ENCODE measurements at regions of chr2 and their contacts with region 1.

Region 1: DNA sequence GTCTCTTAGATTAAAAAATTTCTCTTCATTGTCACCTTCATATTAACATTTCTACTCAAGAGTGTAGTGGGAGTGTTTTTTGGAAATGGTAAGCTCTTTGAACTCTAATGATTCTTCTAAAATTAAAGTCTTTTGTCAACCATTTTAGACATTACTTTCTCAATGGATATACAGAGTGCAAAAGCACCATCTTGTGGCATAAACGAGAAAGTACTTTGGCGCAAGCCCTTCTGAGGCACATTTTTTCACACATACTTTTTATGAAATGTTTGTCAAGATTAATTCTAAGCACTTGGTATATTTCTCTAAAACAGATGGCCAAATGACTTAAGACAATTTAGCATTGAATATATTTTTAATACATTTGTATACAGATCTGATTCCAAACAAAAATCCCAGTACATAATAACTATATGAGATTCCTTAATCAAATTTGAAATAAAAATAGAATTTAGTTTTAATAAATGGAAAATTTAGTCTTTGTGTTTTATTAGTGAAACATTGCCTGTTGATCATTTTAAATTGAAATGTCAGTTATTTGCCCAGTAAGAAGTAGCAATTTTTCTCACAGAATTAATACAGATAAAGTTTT is 63.3 kb upstream of the GALNT5 start:
- DNase-seq: peak; percentile 35
- H3K4me3 Mint-ChIP-seq: no peak overlapping the region
- H3K27ac Mint-ChIP-seq: no peak overlapping the region
- H3K4me1 Mint-ChIP-seq: no peaks in the 10 kb centered on the region
- H3K27me3 Mint-ChIP-seq: peaks cover 2% of the 10 kb centered on the region

Region 2: GRCh38 chr2:155368934-155369333 is 1825.3 kb before region 1 on chr2:
- CTCF ChIA-PET with region 1: interaction called, 4 read pairs
- intact Hi-C with region 1: loop called (anchors 2 kb)
- DNase-seq: no peak
- H3K4me3 Mint-ChIP-seq: no peak overlapping the region
- H3K27ac Mint-ChIP-seq: no peak overlapping the region
- H3K4me1 Mint-ChIP-seq: no peaks in the 10 kb centered on the region
- H3K27me3 Mint-ChIP-seq: peaks cover 2% of the 10 kb centered on the region

Region 3: DNA sequence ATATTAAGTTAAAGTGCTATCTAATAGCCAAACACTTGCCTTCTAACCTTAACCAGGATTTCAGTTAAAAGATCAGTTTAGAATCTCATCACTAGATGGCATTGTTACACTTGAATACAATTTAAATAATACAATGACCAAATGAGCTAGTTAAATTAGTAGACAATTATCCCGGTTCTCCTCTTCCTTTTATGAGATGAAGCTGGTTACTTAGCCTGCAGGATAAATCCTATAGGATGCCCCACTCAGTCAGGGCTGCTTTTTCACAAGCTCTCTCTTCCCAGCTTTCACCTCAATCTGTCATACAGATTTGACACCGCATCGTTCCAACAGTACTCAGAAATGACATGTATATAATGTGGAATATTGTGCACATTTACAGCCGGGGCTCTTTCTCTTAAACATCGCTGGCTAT is 1816.9 kb before region 1 on chr2:
- CTCF ChIA-PET with region 1: interaction called, 7 read pairs
- intact Hi-C with region 1: loop called (anchors 2 kb)
- DNase-seq: no peak
- H3K4me3 Mint-ChIP-seq: no peak overlapping the region
- H3K27ac Mint-ChIP-seq: no peak overlapping the region
- H3K4me1 Mint-ChIP-seq: peaks cover 2% of the 10 kb centered on the region
- H3K27me3 Mint-ChIP-seq: peaks cover 2% of the 10 kb centered on the region

Region 4: DNA sequence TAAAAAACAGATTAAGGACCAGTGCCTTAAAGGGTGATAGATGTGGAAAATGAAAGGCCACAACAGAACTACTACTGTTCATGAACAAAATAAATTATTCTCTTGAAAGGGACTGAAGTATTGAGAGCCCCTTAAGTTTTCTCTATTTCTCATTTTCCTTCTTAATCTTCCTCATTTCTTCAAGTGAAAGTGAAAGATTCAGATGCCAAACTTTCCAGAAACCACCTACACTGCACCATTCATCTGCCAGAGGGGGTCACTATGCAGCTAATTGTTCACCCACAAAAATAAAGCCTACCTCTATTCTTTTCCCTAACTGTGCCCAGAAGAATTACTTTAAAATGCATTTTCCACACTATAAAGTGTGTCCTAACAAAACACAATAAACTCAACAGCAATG is 1001.7 kb before region 1 on chr2:
- CTCF ChIA-PET with region 1: no interaction called
- intact Hi-C with region 1: loop called (anchors 5 kb)
- DNase-seq: peak; percentile 6
- H3K4me3 Mint-ChIP-seq: no peak overlapping the region
- H3K27ac Mint-ChIP-seq: no peak overlapping the region
- H3K4me1 Mint-ChIP-seq: no peaks in the 10 kb centered on the region
- H3K27me3 Mint-ChIP-seq: no peaks in the 10 kb centered on the region

Region 5: DNA sequence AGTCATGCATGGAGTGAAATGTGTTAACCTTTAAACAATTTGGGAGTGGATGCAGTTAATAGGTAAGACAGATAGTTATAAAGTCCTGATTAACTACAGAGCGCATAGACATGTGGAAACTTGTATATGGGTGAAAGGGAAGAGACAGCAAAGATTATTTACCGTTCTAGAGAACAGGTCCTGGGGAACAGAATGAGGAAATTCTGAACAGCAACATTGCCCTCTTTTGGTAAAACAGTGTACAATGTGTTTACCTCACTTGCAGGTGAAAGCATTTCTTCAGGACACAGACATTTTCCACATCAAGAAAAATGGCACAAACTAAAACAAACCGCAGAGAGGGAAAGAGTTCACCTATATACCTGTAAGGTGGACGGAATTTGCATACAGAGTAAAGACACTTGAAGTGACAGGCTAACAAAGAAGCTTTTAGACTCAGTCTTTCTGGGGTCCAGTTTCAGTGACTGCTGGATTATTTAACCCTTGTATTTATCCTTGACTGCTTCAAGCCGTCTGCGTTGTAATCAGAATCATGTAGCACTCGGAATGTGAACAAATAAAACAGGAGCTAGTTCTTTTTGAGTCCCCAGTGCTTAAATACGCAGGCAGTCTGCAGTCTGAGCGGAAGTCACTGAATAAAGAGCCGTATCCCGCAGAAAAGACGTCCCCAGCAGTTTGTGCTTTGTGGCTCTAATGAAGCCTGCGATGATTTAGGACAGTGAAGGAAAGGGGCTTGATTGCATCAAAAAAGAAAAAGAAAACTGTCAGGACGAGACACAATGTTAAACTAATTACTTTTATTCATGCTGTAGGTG is 301.5 kb before region 1 on chr2:
- CTCF ChIA-PET with region 1: no interaction called
- intact Hi-C with region 1: loop called (anchors 2 kb)
- DNase-seq: no peak
- H3K4me3 Mint-ChIP-seq: no peak overlapping the region
- H3K27ac Mint-ChIP-seq: no peak overlapping the region
- H3K4me1 Mint-ChIP-seq: peaks cover 5% of the 10 kb centered on the region
- H3K27me3 Mint-ChIP-seq: peaks cover 15% of the 10 kb centered on the region

Region 6: GRCh38 chr2:157055660-157056199 is 138.5 kb before region 1 on chr2:
- CTCF ChIA-PET with region 1: interaction called, 3 read pairs
- intact Hi-C with region 1: loop called (anchors 5 kb)
- DNase-seq: no peak
- H3K4me3 Mint-ChIP-seq: no peak overlapping the region
- H3K27ac Mint-ChIP-seq: no peak overlapping the region
- H3K4me1 Mint-ChIP-seq: no peaks in the 10 kb centered on the region
- H3K27me3 Mint-ChIP-seq: peaks cover 4% of the 10 kb centered on the region

Region 7: DNA sequence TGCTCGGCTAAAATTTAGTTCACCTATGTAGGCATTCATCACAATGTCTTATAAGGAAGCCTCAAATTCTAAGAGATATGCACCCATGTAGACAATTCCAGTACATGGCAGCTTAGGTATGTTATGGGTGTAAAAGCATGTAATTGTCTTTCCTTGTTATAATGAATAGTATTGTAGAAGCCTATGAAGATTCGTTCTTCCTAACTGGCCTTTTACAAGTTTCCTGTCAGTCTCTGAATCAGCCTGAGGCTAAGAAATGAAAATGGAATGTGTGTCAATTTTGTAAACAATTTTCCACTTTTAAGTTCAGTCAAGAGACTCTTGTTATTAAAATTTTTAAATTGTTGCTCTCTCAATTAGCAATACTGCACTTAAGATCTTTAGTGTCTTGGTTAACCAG is 126.6 kb before region 1 on chr2:
- CTCF ChIA-PET with region 1: no interaction called
- intact Hi-C with region 1: no loop called
- DNase-seq: no peak
- H3K4me3 Mint-ChIP-seq: no peak overlapping the region
- H3K27ac Mint-ChIP-seq: no peak overlapping the region
- H3K4me1 Mint-ChIP-seq: no peaks in the 10 kb centered on the region
- H3K27me3 Mint-ChIP-seq: peaks cover 4% of the 10 kb centered on the region

Region 8: DNA sequence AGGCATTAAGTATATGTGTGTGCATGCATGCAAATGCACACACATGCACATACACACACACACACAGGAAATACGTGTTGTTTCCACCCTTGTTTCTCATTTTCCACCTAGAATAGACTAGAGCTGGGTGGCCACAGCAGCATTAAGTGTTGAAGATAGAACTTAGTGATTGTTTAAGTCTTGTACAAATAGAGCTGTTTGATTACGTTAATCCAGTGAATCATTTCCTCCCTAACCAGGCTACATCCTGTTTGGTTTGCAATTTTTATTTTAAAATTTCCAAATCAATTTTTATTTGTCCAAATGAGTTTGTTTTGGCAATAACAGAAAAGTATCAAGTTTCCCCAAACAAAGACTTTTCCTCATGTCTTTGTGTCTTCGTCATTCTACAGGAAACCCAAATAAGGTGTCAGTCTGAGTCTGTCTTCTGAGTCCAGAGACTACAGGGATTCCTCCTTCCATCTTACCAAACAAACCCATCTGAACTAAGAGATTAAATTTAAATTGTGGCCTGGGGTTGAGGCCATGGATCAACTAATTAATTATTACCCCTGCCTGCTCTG is 11.3 kb before region 1 on chr2:
- CTCF ChIA-PET with region 1: interaction called, 17 read pairs
- intact Hi-C with region 1: no loop called
- DNase-seq: no peak
- H3K4me3 Mint-ChIP-seq: no peak overlapping the region
- H3K27ac Mint-ChIP-seq: no peak overlapping the region
- H3K4me1 Mint-ChIP-seq: peaks cover 4% of the 10 kb centered on the region
- H3K27me3 Mint-ChIP-seq: no peaks in the 10 kb centered on the region

Measured in activated naive CD4-positive, alpha-beta T cell treated with anti-CD3 and anti-CD28 coated beads for 36 hours (primary cell).